Caco-2 (cell line): ENCODE measurements at regions of chr12 and their contacts with region 1.

Region 1: DNA sequence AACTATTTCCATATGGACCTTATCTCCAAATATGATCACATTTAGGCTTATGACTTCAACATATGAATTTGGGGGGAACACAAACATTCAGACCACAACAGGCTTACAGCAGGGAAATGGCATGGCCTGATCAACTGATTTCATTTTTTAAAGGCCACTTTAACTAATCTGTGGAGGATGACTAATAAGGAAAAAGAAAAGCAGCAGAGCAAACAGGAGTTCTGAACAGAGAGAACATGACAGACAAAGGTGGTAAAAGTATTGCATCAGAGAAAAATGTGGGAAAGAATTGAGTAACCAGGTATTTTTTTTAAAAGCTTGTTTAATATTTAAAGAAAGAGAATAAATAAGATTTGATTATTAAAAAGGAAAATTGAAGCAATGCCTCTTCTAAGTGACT is 366.1 kb upstream of the TMPO start:
- DNase-seq: peak in 1 of 2 experiments; percentile 15
- H3K4me3 ChIP-seq: no peak overlapping the region
- H3K4me3 Mint-ChIP-seq: no peak overlapping the region
- H3K27ac Mint-ChIP-seq: peak overlapping the region; percentile 76
- H3K4me1 ChIP-seq: peaks cover 43% of the 10 kb centered on the region
- H3K4me1 Mint-ChIP-seq: peaks cover 27% of the 10 kb centered on the region
- H3K27me3 ChIP-seq: no peaks in the 10 kb centered on the region
- H3K27me3 Mint-ChIP-seq: no peaks in the 10 kb centered on the region
- CTCF ChIP-seq: no peak

Region 2: DNA sequence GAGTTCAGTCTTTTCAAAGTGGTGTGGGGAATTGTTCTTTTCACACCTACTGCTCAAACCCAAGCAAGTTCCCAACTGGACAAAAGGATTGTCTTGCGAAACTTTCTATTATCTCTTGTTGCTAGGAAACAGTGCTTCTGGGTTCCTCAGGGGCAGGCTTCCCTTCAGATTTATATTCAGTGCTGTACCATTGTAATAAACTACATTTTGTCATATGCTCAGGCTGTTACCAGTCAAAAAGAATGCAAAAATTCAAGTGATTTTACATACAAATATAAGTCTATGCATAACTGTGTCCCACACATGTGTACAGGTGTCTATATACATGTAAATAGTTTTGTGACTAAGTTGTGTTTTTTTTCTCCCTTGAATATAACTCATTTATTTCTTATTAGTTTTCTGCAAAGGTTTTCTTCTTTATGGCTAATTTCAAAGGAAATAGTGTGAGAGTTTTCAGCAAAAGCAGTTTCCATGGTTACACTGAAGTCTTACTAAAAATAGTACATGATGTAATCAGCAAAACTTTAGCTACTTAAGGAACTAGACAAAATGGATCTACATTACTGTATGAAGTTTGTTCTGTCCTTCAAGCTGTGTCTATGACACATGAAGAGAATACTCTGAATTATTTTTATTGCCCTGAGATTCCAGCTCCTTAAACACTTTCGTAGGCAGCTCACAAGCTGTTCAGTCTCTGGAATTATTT is 64.1 kb before region 1 on chr12:
- CTCF ChIA-PET with region 1: no interaction called
- POLR2A ChIA-PET with region 1: no interaction called
- intact Hi-C with region 1: loop called (anchors 1 kb)
- DNase-seq: peak in 1 of 2 experiments; percentile 54
- H3K4me3 ChIP-seq: no peak overlapping the region
- H3K4me3 Mint-ChIP-seq: no peak overlapping the region
- H3K27ac Mint-ChIP-seq: peak overlapping the region; percentile 79
- H3K4me1 ChIP-seq: peaks cover 34% of the 10 kb centered on the region
- H3K4me1 Mint-ChIP-seq: peaks cover 32% of the 10 kb centered on the region
- H3K27me3 ChIP-seq: no peaks in the 10 kb centered on the region
- H3K27me3 Mint-ChIP-seq: no peaks in the 10 kb centered on the region
- CTCF ChIP-seq: no peak

Region 3: GRCh38 chr12:98162906-98163678 is 13.8 kb after region 1 on chr12:
- CTCF ChIA-PET with region 1: interaction called, 3 read pairs
- POLR2A ChIA-PET with region 1: no interaction called
- intact Hi-C with region 1: loop called (anchors 2 kb)
- DNase-seq: peak; percentile 52 to 74
- H3K4me3 ChIP-seq: no peak overlapping the region
- H3K4me3 Mint-ChIP-seq: peak overlapping the region; percentile 68
- H3K27ac Mint-ChIP-seq: peak overlapping the region; percentile 83
- H3K4me1 ChIP-seq: peaks cover 40% of the 10 kb centered on the region
- H3K4me1 Mint-ChIP-seq: peaks cover 39% of the 10 kb centered on the region
- H3K27me3 ChIP-seq: no peaks in the 10 kb centered on the region
- H3K27me3 Mint-ChIP-seq: no peaks in the 10 kb centered on the region
- CTCF ChIP-seq: no peak